ENCODE measurements at regions of chr19 and their contacts with region 1.

Region 1: DNA sequence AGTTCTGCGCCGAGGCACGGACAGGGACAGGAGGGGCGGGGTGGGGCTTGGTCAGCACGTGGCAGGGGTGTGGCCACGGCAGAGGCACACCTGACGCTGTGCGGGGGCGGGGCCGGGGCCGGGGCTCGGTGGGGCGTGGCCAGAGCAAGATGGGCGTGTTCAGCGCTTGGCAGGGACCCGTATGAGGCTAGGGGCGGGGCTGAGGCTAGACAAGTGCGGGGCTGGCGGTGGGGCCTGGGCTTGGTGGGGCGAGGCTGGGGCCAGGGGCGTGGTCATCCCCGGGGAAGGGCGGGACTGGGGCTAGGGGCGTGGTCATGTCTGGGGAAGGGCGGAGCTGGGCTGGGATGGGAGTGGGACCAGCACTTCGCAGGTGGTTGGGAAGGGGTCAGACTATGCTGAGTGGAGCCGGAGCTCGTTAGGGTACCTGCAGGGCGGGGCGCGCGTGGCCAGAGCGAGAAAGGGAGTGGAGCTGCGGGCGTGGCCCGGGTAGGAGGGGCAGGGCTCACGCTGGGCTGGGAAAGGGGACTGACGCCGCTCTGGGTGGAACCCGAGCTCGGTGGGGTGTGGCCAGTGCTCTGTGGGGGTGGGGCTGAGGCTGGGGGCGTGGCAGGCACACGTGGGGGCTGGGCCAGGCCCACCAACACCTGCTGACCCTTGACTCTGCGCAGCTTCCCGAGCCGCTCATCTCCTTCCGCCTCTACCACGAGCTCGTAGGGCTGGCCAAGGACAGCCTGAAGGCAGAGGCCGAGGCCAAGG is 12.8 kb downstream of the POLR2E start:
- DNase-seq: peak; percentile 76 to 95 (median 86)
- ATAC-seq: peak; percentile 76
- H3K4me3 ChIP-seq: no peak overlapping the region
- H3K4me3 Mint-ChIP-seq: peak overlapping the region; percentile 87
- H3K27ac ChIP-seq: peak overlapping the region; percentile 34 to 64
- H3K27ac Mint-ChIP-seq: peak overlapping the region; percentile 98
- H3K4me1 ChIP-seq: peaks cover 92% of the 10 kb centered on the region
- H3K4me1 Mint-ChIP-seq: peaks cover 39% of the 10 kb centered on the region
- H3K27me3 ChIP-seq: no peaks in the 10 kb centered on the region
- H3K27me3 Mint-ChIP-seq: no peaks in the 10 kb centered on the region
- CTCF ChIP-seq: no peak

Region 2: DNA sequence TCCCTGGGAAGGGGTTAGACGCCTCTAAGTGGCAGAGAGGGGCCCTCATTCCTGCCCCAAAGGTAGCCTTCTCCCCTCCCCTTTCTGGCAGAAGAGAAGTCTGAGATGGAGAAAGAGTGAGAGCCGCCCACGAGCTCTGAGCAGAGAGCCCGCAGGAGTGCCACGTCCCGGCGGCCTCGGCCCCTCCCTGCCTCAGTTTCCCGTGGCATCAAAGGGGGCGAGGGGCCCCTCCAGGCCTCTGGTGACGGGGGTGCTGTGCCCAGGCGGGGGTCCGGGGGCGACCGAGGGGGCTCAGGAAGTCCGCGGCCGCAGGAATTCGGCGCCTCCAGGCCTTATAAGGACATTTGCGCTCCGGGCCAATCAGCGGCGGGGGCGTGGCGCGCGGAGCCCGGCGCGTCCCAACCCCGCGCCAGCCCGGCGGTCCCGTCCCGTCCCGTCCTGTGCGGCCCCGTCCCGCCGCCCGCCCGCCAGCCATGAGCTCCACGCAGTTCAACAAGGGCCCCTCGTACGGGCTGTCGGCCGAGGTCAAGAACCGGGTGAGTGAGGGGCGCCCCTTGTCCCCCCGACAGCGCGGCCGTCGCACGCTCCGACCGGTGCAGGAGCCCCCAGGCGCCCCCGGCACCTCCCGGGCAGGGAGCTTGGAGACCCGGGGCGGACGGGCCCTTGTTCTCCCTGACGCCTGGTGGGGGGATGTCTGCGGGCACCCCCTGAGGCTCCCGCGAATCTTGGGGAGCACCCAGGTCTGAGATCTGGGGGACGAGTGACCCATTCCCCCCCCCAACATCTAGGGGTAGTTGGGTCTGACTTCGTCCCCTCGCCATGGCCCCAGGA is 55.9 kb before region 1 on chr19 and contains the start of gene CNN2:
- CTCF ChIA-PET with region 1: interaction called, 4 read pairs
- POLR2A ChIA-PET with region 1: interaction called, 186 read pairs
- intact Hi-C with region 1: loop called in 1 of 2 experiments (anchors 2 kb)
- DNase-seq: peak in 11 of 14 experiments; percentile 47 to 83 (median 66)
- ATAC-seq: peak; percentile 16
- H3K4me3 ChIP-seq: peak within 1 kb of the TSS; percentile 99
- H3K4me3 Mint-ChIP-seq: peak within 1 kb of the TSS; percentile 99
- H3K27ac ChIP-seq: peak within 1 kb of the TSS; percentile 73 to 85
- H3K27ac Mint-ChIP-seq: peak within 1 kb of the TSS; percentile 93
- H3K4me1 ChIP-seq: peaks cover 50% of the 10 kb centered on the region
- H3K4me1 Mint-ChIP-seq: peaks cover 24% of the 10 kb centered on the region
- H3K27me3 ChIP-seq: no peaks in the 10 kb centered on the region
- H3K27me3 Mint-ChIP-seq: peaks cover 3% of the 10 kb centered on the region
- CTCF ChIP-seq: no peak
- total RNA-seq, gene CNN2: 307 to 318 TPM

Region 3: DNA sequence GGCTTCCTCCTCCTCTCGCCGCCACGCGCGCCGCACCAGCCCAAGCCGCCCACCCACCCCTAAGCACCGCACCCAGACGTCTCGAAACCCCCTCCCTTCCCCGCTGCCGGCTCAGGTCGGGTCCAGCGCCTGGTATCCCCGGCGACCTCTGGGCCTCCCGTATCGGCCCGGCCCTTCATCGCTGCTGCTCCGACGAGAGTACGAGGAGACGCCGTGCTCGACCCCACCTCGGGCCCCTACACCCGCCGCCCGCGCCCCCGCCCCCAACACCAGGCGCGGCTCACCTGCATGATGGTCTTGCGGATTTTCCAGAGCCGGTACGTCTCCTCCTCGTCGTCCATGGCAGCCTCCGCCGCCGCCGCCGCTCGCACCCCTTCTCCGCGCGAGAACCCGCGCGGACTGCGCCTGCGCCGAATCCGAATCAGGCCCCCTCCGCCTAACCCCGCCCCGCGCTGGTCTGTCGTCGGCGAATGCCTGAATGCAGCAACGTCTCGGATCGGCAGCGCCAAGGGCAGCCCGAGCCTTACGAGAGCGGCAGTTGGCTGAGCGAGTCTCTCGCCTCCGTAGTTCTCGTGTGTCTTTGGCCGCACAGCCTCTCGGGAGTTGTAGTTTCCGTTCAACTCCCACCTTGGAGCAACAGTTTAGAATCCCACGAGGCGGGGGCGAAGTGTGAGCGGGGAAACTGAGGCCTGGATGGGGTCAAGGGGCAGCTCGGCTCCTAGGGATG is 12.8 kb after region 1 on chr19 and contains the start of gene POLR2E:
- CTCF ChIA-PET with region 1: interaction called, 4 read pairs
- POLR2A ChIA-PET with region 1: interaction called, 1,253 read pairs
- intact Hi-C with region 1: no loop called
- DNase-seq: peak; percentile 97 to 100 (median 98)
- ATAC-seq: peak; percentile 90
- H3K4me3 ChIP-seq: peak within 1 kb of the TSS; percentile 89
- H3K4me3 Mint-ChIP-seq: peak within 1 kb of the TSS; percentile 94
- H3K27ac ChIP-seq: peak within 1 kb of the TSS; percentile 65 to 90
- H3K27ac Mint-ChIP-seq: peak within 1 kb of the TSS; percentile 84
- H3K4me1 ChIP-seq: peaks cover 61% of the 10 kb centered on the region
- H3K4me1 Mint-ChIP-seq: peaks cover 41% of the 10 kb centered on the region
- H3K27me3 ChIP-seq: no peaks in the 10 kb centered on the region
- H3K27me3 Mint-ChIP-seq: no peaks in the 10 kb centered on the region
- CTCF ChIP-seq: no peak
- total RNA-seq, gene POLR2E: 45.8 to 49.0 TPM

Region 4: GRCh38 chr19:1154731-1155351 is 72.5 kb after region 1 on chr19:
- CTCF ChIA-PET with region 1: no interaction called
- POLR2A ChIA-PET with region 1: no interaction called
- intact Hi-C with region 1: no loop called
- DNase-seq: peak in 2 of 14 experiments; percentile 55 to 60
- ATAC-seq: no peak
- H3K4me3 ChIP-seq: no peak overlapping the region
- H3K4me3 Mint-ChIP-seq: no peak overlapping the region
- H3K27ac ChIP-seq: no peak overlapping the region
- H3K27ac Mint-ChIP-seq: no peak overlapping the region
- H3K4me1 ChIP-seq: peaks cover 14% of the 10 kb centered on the region
- H3K4me1 Mint-ChIP-seq: no peaks in the 10 kb centered on the region
- H3K27me3 ChIP-seq: no peaks in the 10 kb centered on the region
- H3K27me3 Mint-ChIP-seq: no peaks in the 10 kb centered on the region
- CTCF ChIP-seq: no peak

Measured in CD4-positive, alpha-beta T cell (primary cell).